ENCODE measurements at regions of chr3 and their contacts with region 1.

Region 1: DNA sequence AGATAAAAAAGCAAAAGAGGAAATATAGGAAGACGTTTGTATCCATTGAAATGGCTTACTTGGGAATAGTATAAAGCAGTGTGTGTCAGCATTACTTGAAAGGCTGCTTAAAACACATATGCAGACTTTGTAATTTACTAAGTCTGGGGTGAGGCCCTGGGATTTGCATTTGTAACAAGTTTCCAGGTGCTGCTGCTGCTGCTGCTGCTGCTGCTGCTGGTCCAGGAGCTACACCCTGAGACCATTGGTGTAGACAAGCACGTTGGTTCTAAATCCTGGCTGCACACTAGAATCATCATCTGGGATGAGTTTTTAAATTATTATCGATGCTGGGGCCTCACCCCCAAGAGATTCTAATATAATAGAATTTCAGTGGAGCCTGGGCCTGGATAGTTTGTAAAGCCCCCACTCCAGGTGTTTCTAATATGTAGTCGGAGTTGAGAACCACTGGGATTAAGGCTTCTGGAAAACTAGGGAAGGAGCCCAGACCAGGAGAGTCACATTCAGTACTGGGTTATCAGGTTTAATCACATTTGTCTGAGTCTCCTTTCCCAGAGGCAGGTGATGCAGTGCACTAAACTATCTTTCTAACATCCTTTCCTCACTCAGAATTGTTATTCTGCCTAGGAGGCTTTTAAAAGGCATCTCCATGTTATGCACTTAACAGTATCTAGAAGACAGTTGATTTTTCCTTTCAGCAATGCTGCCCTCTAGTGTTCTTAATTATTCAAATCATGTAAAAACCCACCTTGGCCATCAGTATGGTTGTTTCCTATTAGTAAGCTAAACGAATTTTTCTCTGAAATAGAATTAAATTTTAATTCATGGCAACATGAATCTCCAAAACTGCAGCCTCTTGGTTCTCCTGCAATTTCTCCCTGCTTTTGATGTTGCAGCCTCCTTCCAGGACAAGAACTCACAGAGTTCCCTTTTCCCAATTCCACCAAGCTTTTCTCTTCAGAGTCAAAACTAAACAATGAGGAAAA is 45.4 kb downstream of the SSR3 start:
- DNase-seq: no peak
- H3K4me3 Mint-ChIP-seq: no peak overlapping the region
- H3K27ac Mint-ChIP-seq: no peak overlapping the region
- H3K4me1 Mint-ChIP-seq: peaks cover 13% of the 10 kb centered on the region
- H3K27me3 Mint-ChIP-seq: peaks cover 1% of the 10 kb centered on the region

Region 2: DNA sequence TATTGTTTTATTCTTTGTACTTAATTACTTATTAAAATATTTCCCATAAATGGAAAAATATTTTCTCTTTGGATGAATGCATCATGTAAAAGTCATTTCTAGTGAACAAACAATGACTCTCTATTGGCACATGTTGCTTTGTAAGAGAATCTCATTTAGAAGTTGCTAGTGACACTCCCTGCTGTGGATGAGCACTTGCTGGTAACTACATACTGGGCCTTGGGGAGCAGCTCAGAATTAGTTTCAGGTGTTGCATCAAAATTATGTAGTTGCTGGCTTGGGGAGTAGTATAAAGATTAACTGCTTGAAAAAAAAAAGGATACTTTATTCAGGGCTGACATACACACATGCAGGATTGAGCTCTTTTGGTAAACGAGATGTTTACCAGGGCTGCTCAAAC is 469.4 kb before region 1 on chr3:
- CTCF ChIA-PET with region 1: interaction called, 3 read pairs
- POLR2A ChIA-PET with region 1: no interaction called
- intact Hi-C with region 1: loop called (anchors 10 kb)
- DNase-seq: no peak
- H3K4me3 Mint-ChIP-seq: no peak overlapping the region
- H3K27ac Mint-ChIP-seq: no peak overlapping the region
- H3K4me1 Mint-ChIP-seq: peaks cover 2% of the 10 kb centered on the region
- H3K27me3 Mint-ChIP-seq: peaks cover 3% of the 10 kb centered on the region

Region 3: DNA sequence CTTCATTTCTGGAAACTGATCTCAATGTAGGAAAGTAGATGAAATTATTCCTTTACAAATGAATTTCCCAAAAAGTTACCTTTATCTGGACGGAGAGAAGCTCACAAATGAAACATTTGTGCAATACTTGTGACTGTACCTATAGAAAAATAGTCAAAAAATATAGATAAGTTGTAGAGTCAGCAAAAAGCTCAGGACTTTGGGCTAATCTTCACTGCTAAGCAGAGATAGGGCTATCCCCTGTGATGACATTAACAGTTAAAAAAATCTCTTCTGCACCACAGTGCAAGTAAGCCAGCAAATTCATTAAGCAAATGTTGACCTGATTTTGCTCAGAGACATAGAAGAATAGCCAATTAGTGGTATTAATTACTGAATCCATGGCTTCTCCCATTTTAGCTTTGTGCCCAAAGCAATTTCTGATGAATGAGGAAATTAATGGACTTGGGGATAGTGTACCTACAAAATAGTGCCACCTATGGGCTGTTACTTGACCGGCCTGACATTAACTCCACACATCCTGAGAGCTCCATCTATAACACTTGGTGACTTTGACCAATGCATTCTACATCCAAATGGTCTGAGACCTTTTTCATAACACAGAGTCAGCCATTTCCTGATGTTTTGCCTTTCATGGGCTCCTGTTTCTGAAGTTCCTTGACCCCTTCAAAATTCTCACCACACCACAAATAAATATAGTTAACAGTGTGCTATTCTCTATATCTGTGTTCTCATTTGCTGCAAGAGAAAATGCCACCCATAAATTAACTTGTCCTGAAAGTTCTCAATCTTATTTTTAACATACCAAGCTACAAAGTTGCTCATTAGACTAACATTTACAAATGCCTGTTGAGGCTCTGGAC is 59.5 kb before region 1 on chr3:
- CTCF ChIA-PET with region 1: interaction called, 20 read pairs
- POLR2A ChIA-PET with region 1: no interaction called
- intact Hi-C with region 1: loop called (anchors 1 kb)
- DNase-seq: no peak
- H3K4me3 Mint-ChIP-seq: no peak overlapping the region
- H3K27ac Mint-ChIP-seq: no peak overlapping the region
- H3K4me1 Mint-ChIP-seq: no peaks in the 10 kb centered on the region
- H3K27me3 Mint-ChIP-seq: no peaks in the 10 kb centered on the region

Region 4: GRCh38 chr3:156474560-156475389 is 34.7 kb before region 1 on chr3:
- CTCF ChIA-PET with region 1: interaction called, 5 read pairs
- POLR2A ChIA-PET with region 1: no interaction called
- intact Hi-C with region 1: loop called (anchors 5 kb)
- DNase-seq: peak; percentile 11
- H3K4me3 Mint-ChIP-seq: no peak overlapping the region
- H3K27ac Mint-ChIP-seq: no peak overlapping the region
- H3K4me1 Mint-ChIP-seq: no peaks in the 10 kb centered on the region
- H3K27me3 Mint-ChIP-seq: peaks cover 12% of the 10 kb centered on the region

Region 5: GRCh38 chr3:156497326-156497725 is 12.2 kb before region 1 on chr3:
- CTCF ChIA-PET with region 1: interaction called, 13 read pairs
- POLR2A ChIA-PET with region 1: no interaction called
- intact Hi-C with region 1: no loop called
- DNase-seq: no peak
- H3K4me3 Mint-ChIP-seq: no peak overlapping the region
- H3K27ac Mint-ChIP-seq: no peak overlapping the region
- H3K4me1 Mint-ChIP-seq: no peaks in the 10 kb centered on the region
- H3K27me3 Mint-ChIP-seq: peaks cover 6% of the 10 kb centered on the region

Region 6: GRCh38 chr3:156536524-156537231 is 27.2 kb after region 1 on chr3:
- CTCF ChIA-PET with region 1: interaction called, 3 read pairs
- POLR2A ChIA-PET with region 1: no interaction called
- intact Hi-C with region 1: loop called (anchors 1 kb)
- DNase-seq: no peak
- H3K4me3 Mint-ChIP-seq: no peak overlapping the region
- H3K27ac Mint-ChIP-seq: no peak overlapping the region
- H3K4me1 Mint-ChIP-seq: peaks cover 8% of the 10 kb centered on the region
- H3K27me3 Mint-ChIP-seq: no peaks in the 10 kb centered on the region